Transverse colon (tissue), 4 donors: ENCODE measurements at regions of chrX and their contacts with region 1.

Region 1: GRCh38 chrX:101407748-101408531 is at the starts of genes GLA and HNRNPH2:
- DNase-seq: peak; percentile 92
- H3K4me3 ChIP-seq: peak within 1 kb of the TSS; percentile 29 to 67 (median 52)
- H3K27ac ChIP-seq: peak within 1 kb of the TSS; percentile 81 to 94 (median 92)
- H3K4me1 ChIP-seq: peaks cover 0 to 31% (median 2%) of the 10 kb centered on the region in 4 donors
- H3K27me3 ChIP-seq: no peaks in the 10 kb centered on the region
- CTCF ChIP-seq: peak in 2 of 5 experiments; percentile 43 to 54
- EP300 ChIP-seq: peak; percentile 34
- POLR2A ChIP-seq: peak; percentile 86
- total RNA-seq, gene GLA: 1.4 to 20.8 (median 13.5) TPM
- total RNA-seq, gene HNRNPH2: 9.7 to 46.1 (median 33.2) TPM

Region 2: GRCh38 chrX:101642093-101642492 is 234.2 kb after region 1 on chrX:
- in situ Hi-C with region 1: loop called in 1 of 4 experiments (anchors 25 kb)
- intact Hi-C with region 1: no loop called
- DNase-seq: no peak
- H3K4me3 ChIP-seq: no peak overlapping the region
- H3K27ac ChIP-seq: no peak overlapping the region
- H3K4me1 ChIP-seq: no peaks in the 10 kb centered on the region
- H3K27me3 ChIP-seq: no peaks in the 10 kb centered on the region
- CTCF ChIP-seq: no peak
- EP300 ChIP-seq: no peak
- POLR2A ChIP-seq: no peak